CD4-positive, alpha-beta memory T cell (primary cell): ENCODE measurements at regions of chr11 and their contacts with region 1.

Region 1: DNA sequence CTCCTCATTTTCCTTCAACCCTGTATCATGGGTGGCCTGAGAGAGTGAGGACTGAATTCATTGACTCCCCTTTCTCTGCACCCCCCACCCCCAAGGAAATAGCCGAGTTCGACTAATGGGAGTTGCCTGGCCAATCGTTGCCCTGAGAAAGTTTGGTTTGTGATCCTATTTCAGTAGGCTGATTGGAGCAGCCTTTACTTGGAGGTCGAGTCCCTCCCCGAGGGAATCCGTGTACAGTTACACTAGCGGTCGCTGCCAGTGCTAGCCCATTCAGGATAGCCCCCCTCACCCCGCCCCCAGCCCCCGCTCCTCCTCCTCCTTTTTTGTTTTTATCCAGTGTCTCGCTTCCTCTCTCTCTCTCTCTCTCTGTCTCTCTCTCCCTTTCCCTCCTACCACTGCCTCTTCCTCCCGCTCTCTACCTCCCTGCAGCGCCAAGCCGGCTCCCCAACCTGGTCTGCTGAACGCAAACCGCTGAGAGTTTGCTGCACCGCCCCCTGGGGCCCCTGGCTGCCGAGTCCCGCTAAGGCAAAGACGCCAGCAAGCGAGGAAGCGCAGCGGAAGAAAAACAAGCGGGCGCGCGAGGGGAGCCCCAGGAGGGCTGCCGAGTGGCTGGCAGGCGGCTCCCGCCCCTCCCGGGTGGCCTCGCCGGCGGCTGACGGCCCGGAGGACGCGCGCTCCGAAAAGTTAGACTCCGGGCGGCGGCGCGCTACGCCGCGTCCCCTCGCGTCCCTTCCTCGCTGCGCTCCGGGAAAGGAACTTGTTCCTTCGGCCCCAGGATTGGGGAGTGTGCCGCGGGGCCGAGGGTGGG is at the start of gene GRAMD1B:
- DNase-seq: peak; percentile 79 to 84 (median 81)
- H3K4me3 ChIP-seq: peak within 1 kb of the TSS; percentile 69 to 84
- H3K4me3 Mint-ChIP-seq: peak within 1 kb of the TSS; percentile 90 to 98 (median 92)
- H3K27ac ChIP-seq: peak within 1 kb of the TSS; percentile 67
- H3K27ac Mint-ChIP-seq: peak within 1 kb of the TSS; percentile 86 to 96 (median 92)
- H3K4me1 ChIP-seq: peaks cover 24% of the 10 kb centered on the region
- H3K4me1 Mint-ChIP-seq: peaks cover 20 to 55% (median 35%) of the 10 kb centered on the region in 4 donors
- H3K27me3 ChIP-seq: no peaks in the 10 kb centered on the region
- H3K27me3 Mint-ChIP-seq: peaks cover 0 to 2% of the 10 kb centered on the region in 2 donors
- total RNA-seq, gene GRAMD1B: 19.5 to 26.0 TPM

Region 2: GRCh38 chr11:123301696-123302400 is 128.3 kb before region 1 on chr11:
- CTCF ChIA-PET with region 1: interaction called, 4 read pairs
- POLR2A ChIA-PET with region 1: interaction called, 6 read pairs
- intact Hi-C with region 1: loop called (anchors 1 kb)
- DNase-seq: peak; percentile 58 to 72 (median 64)
- H3K4me3 ChIP-seq: peak overlapping the region; percentile 38 to 42
- H3K4me3 Mint-ChIP-seq: peak overlapping the region; percentile 72 to 84 (median 76)
- H3K27ac ChIP-seq: peak overlapping the region; percentile 51
- H3K27ac Mint-ChIP-seq: peak overlapping the region; percentile 75 to 89 (median 83)
- H3K4me1 ChIP-seq: peaks cover 46% of the 10 kb centered on the region
- H3K4me1 Mint-ChIP-seq: peaks cover 27 to 47% (median 37%) of the 10 kb centered on the region in 4 donors
- H3K27me3 ChIP-seq: no peaks in the 10 kb centered on the region
- H3K27me3 Mint-ChIP-seq: no peaks in the 10 kb centered on the region

Region 3: DNA sequence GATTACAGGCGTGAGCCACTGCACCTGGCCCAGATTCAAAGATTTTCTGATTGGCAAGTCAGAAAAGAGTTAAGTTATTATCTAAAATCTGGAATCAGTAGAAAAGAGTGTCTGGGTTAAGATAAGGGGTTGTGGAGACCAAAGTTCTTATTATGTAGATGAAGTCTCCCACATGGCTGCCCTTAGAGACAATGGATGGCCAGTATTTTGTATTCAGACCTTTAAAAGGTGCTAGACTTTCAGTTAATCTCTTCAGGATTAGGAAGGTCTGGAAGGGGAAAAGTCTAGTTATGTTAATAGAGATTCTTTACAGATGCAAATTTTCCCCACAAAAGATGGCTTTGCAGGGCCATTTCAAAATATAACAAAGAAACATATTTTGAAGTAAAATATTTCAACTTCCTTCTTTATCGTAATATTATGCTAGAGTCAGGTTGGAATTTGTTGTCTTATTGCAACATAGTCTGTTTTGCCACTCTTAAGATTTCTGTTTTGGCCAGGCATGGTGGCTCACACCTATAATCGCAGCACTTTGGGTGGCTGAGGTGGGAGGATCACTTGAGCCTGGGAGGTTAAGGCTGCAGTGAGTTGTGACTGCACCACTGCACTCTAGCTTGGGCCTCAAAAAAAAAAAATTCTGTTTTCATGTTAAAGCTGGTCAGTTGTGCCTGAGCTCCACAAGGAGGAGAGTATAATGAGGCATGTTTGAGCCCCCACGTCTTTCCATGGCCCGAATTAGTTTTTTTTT is 13.9 kb after region 1 on chr11:
- CTCF ChIA-PET with region 1: interaction called, 11 read pairs
- POLR2A ChIA-PET with region 1: no interaction called
- intact Hi-C with region 1: no loop called
- DNase-seq: no peak
- H3K4me3 ChIP-seq: no peak overlapping the region
- H3K4me3 Mint-ChIP-seq: no peak overlapping the region
- H3K27ac ChIP-seq: no peak overlapping the region
- H3K27ac Mint-ChIP-seq: no peak overlapping the region
- H3K4me1 ChIP-seq: peaks cover under 1% of the 10 kb centered on the region
- H3K4me1 Mint-ChIP-seq: peaks cover 4 to 32% (median 12%) of the 10 kb centered on the region in 4 donors
- H3K27me3 ChIP-seq: no peaks in the 10 kb centered on the region
- H3K27me3 Mint-ChIP-seq: no peaks in the 10 kb centered on the region

Region 4: GRCh38 chr11:123457187-123457770 is 27.2 kb after region 1 on chr11:
- CTCF ChIA-PET with region 1: interaction called, 12 read pairs
- POLR2A ChIA-PET with region 1: interaction called, 9 read pairs
- intact Hi-C with region 1: no loop called
- DNase-seq: peak in 4 of 5 donors; percentile 27 to 48 (median 32)
- H3K4me3 ChIP-seq: no peak overlapping the region
- H3K4me3 Mint-ChIP-seq: peak overlapping the region in 7 of 8 donors; percentile 13 to 68 (median 59)
- H3K27ac ChIP-seq: peak overlapping the region; percentile 26
- H3K27ac Mint-ChIP-seq: peak overlapping the region; percentile 82 to 92 (median 90)
- H3K4me1 ChIP-seq: peaks cover 46% of the 10 kb centered on the region
- H3K4me1 Mint-ChIP-seq: peaks cover 29 to 48% (median 38%) of the 10 kb centered on the region in 4 donors
- H3K27me3 ChIP-seq: no peaks in the 10 kb centered on the region
- H3K27me3 Mint-ChIP-seq: no peaks in the 10 kb centered on the region

Region 5: GRCh38 chr11:123478352-123478987 is 48.4 kb after region 1 on chr11:
- CTCF ChIA-PET with region 1: interaction called, 29 read pairs
- POLR2A ChIA-PET with region 1: interaction called, 4 read pairs
- intact Hi-C with region 1: loop called (anchors 1 kb)
- DNase-seq: peak in 4 of 5 donors; percentile 49 to 71 (median 56)
- H3K4me3 ChIP-seq: no peak overlapping the region
- H3K4me3 Mint-ChIP-seq: peak overlapping the region in 7 of 8 donors; percentile 49 to 79 (median 63)
- H3K27ac ChIP-seq: no peak overlapping the region
- H3K27ac Mint-ChIP-seq: peak overlapping the region in 4 of 7 donors; percentile 4 to 61 (median 56)
- H3K4me1 ChIP-seq: peaks cover 9% of the 10 kb centered on the region
- H3K4me1 Mint-ChIP-seq: peaks cover 6 to 14% (median 11%) of the 10 kb centered on the region in 4 donors
- H3K27me3 ChIP-seq: no peaks in the 10 kb centered on the region
- H3K27me3 Mint-ChIP-seq: no peaks in the 10 kb centered on the region